Mammary epithelial cell (primary cell): ENCODE measurements at regions of chr12 and their contacts with region 1.

Region 1: GRCh38 chr12:60106214-60106613 is 510.4 kb downstream of the SLC16A7 start:
- DNase-seq: no peak
- H3K4me3 ChIP-seq: no peak overlapping the region
- H3K27ac ChIP-seq: no peak overlapping the region
- H3K4me1 ChIP-seq: peaks cover 6% of the 10 kb centered on the region
- H3K27me3 ChIP-seq: no peaks in the 10 kb centered on the region
- CTCF ChIP-seq: peak; percentile 35 to 47

Region 2: GRCh38 chr12:60257063-60257462 is 150.8 kb after region 1 on chr12:
- CTCF ChIA-PET with region 1: no interaction called
- dilution Hi-C with region 1: no loop called
- in situ Hi-C with region 1: no loop called
- intact Hi-C with region 1: loop called (anchors 5 kb)
- DNase-seq: peak; percentile 43
- H3K4me3 ChIP-seq: no peak overlapping the region
- H3K27ac ChIP-seq: no peak overlapping the region
- H3K4me1 ChIP-seq: no peaks in the 10 kb centered on the region
- H3K27me3 ChIP-seq: no peaks in the 10 kb centered on the region
- CTCF ChIP-seq: peak; percentile 21 to 30

Region 3: DNA sequence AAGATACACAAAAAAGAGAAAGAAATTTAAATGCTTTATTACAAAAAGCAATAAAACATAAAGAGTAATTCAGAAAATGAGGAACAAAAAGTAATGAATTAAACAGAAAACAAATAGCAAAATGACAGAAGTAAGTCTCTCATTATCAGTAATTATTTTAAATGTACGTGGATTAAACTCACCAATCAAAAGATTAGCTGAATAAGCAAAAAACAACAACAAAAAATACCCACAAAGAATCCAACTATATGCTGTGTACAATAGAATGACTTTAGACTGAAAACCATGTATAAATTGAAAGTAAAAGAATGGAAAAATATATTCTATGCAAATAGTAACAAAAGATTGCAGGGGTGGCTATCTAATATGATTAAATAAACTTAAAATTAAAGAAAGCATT is 496.4 kb after region 1 on chr12:
- CTCF ChIA-PET with region 1: no interaction called
- dilution Hi-C with region 1: no loop called
- in situ Hi-C with region 1: no loop called
- intact Hi-C with region 1: no loop called
- DNase-seq: no peak
- H3K4me3 ChIP-seq: no peak overlapping the region
- H3K27ac ChIP-seq: no peak overlapping the region
- H3K4me1 ChIP-seq: no peaks in the 10 kb centered on the region
- H3K27me3 ChIP-seq: no peaks in the 10 kb centered on the region
- CTCF ChIP-seq: no peak